ENCODE measurements at regions of chr7 and their contacts with region 1.

Region 1: GRCh38 chr7:47818796-47819606 is 129.3 kb downstream of the PKD1L1 start:
- DNase-seq: peak; percentile 79
- ATAC-seq: peak; percentile 69
- H3K4me3 ChIP-seq: no peak overlapping the region
- H3K4me3 Mint-ChIP-seq: no peak overlapping the region
- H3K27ac ChIP-seq: no peak overlapping the region
- H3K27ac Mint-ChIP-seq: no peak overlapping the region
- H3K4me1 ChIP-seq: peaks cover 0 to under 1% of the 10 kb centered on the region in 2 donors
- H3K4me1 Mint-ChIP-seq: peaks cover 6% of the 10 kb centered on the region
- H3K27me3 ChIP-seq: no peaks in the 10 kb centered on the region
- H3K27me3 Mint-ChIP-seq: no peaks in the 10 kb centered on the region
- CTCF ChIP-seq: peak; percentile 99

Region 2: GRCh38 chr7:47351233-47352154 is 467.5 kb before region 1 on chr7:
- CTCF ChIA-PET with region 1: no interaction called
- POLR2A ChIA-PET with region 1: no interaction called
- intact Hi-C with region 1: loop called (anchors 1 kb)
- DNase-seq: no peak
- ATAC-seq: no peak
- H3K4me3 ChIP-seq: no peak overlapping the region
- H3K4me3 Mint-ChIP-seq: no peak overlapping the region
- H3K27ac ChIP-seq: no peak overlapping the region
- H3K27ac Mint-ChIP-seq: no peak overlapping the region
- H3K4me1 ChIP-seq: no peaks in the 10 kb centered on the region
- H3K4me1 Mint-ChIP-seq: no peaks in the 10 kb centered on the region
- H3K27me3 ChIP-seq: no peaks in the 10 kb centered on the region
- H3K27me3 Mint-ChIP-seq: no peaks in the 10 kb centered on the region
- CTCF ChIP-seq: no peak

Region 3: DNA sequence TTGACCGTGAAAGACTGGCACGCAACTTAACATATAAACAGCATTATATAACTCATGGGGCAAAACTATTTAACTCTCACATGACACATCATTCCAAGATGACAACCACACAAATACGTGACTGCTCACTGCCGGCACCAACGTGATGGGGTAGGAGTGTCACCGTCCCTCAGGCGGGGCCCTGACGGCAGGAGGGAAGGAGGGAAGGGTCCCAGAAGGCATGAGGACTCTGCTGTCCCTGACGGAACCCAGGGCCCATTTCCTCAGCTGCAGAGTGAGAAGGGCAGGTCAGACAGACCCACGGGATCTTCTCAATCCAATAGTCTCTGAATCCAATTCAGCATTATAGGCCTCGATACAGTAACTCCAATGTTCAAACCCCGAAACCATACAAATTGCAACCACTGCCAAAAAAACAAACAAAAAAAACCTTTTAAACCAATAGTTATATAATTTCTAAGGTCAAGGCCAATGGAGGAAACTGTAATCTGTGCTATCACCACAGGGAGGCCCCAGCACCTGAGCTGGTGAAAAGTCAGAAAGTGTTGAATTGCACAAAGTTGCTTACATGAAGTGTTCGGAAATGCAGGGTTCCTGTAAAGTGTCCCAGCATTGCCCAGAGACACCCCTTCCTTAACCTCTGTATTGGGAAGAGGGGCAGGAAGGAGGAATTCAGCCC is 374.5 kb before region 1 on chr7:
- CTCF ChIA-PET with region 1: interaction called, 43 read pairs
- POLR2A ChIA-PET with region 1: interaction called, 3 read pairs
- intact Hi-C with region 1: loop called (anchors 1 kb)
- DNase-seq: peak; percentile 47
- ATAC-seq: peak; percentile 51
- H3K4me3 ChIP-seq: no peak overlapping the region
- H3K4me3 Mint-ChIP-seq: no peak overlapping the region
- H3K27ac ChIP-seq: no peak overlapping the region
- H3K27ac Mint-ChIP-seq: peak overlapping the region; percentile 26
- H3K4me1 ChIP-seq: peaks cover 0 to 5% of the 10 kb centered on the region in 2 donors
- H3K4me1 Mint-ChIP-seq: peaks cover 16% of the 10 kb centered on the region
- H3K27me3 ChIP-seq: no peaks in the 10 kb centered on the region
- H3K27me3 Mint-ChIP-seq: no peaks in the 10 kb centered on the region
- CTCF ChIP-seq: peak; percentile 65

Region 4: GRCh38 chr7:47581806-47582763 is 236.9 kb before region 1 on chr7 and contains the start of gene TNS3:
- CTCF ChIA-PET with region 1: interaction called, 9 read pairs
- POLR2A ChIA-PET with region 1: no interaction called
- intact Hi-C with region 1: loop called (anchors 1 kb)
- DNase-seq: peak; percentile 76
- ATAC-seq: peak; percentile 80
- H3K4me3 ChIP-seq: peak within 1 kb of the TSS; percentile 58 to 75 (median 70)
- H3K4me3 Mint-ChIP-seq: peak within 1 kb of the TSS; percentile 83
- H3K27ac ChIP-seq: peak within 1 kb of the TSS; percentile 13 to 40
- H3K27ac Mint-ChIP-seq: peak within 1 kb of the TSS; percentile 90
- H3K4me1 ChIP-seq: peaks cover 37 to 55% of the 10 kb centered on the region in 2 donors
- H3K4me1 Mint-ChIP-seq: peaks cover 61% of the 10 kb centered on the region
- H3K27me3 ChIP-seq: peaks cover 0 to 8% (median 0%) of the 10 kb centered on the region in 4 experiments
- H3K27me3 Mint-ChIP-seq: no peaks in the 10 kb centered on the region
- CTCF ChIP-seq: peak; percentile 33
- total RNA-seq, gene TNS3: 70.1 and 77.5 TPM in 2 replicates

Region 5: GRCh38 chr7:47720141-47720906 is 98.7 kb before region 1 on chr7:
- CTCF ChIA-PET with region 1: interaction called, 3 read pairs
- POLR2A ChIA-PET with region 1: no interaction called
- intact Hi-C with region 1: loop called (anchors 1 kb)
- DNase-seq: peak; percentile 45
- ATAC-seq: peak; percentile 12
- H3K4me3 ChIP-seq: no peak overlapping the region
- H3K4me3 Mint-ChIP-seq: peak overlapping the region; percentile 64
- H3K27ac ChIP-seq: peak overlapping the region in 1 of 2 donors; percentile 28
- H3K27ac Mint-ChIP-seq: peak overlapping the region; percentile 87
- H3K4me1 ChIP-seq: peaks cover 57 to 63% of the 10 kb centered on the region in 2 donors
- H3K4me1 Mint-ChIP-seq: peaks cover 71% of the 10 kb centered on the region
- H3K27me3 ChIP-seq: no peaks in the 10 kb centered on the region
- H3K27me3 Mint-ChIP-seq: no peaks in the 10 kb centered on the region
- CTCF ChIP-seq: no peak

Region 6: GRCh38 chr7:48452218-48452617 is 633.2 kb after region 1 on chr7:
- CTCF ChIA-PET with region 1: no interaction called
- POLR2A ChIA-PET with region 1: no interaction called
- intact Hi-C with region 1: no loop called
- DNase-seq: no peak
- ATAC-seq: no peak
- H3K4me3 ChIP-seq: no peak overlapping the region
- H3K4me3 Mint-ChIP-seq: no peak overlapping the region
- H3K27ac ChIP-seq: no peak overlapping the region
- H3K27ac Mint-ChIP-seq: no peak overlapping the region
- H3K4me1 ChIP-seq: no peaks in the 10 kb centered on the region
- H3K4me1 Mint-ChIP-seq: no peaks in the 10 kb centered on the region
- H3K27me3 ChIP-seq: no peaks in the 10 kb centered on the region
- H3K27me3 Mint-ChIP-seq: no peaks in the 10 kb centered on the region
- CTCF ChIP-seq: no peak